ENCODE measurements at regions of chr12 and their contacts with region 1.

Region 1: GRCh38 chr12:106919910-106920544 is 35.7 kb upstream of the TMEM263 start:
- DNase-seq: no peak
- H3K4me3 Mint-ChIP-seq: no peak overlapping the region
- H3K27ac Mint-ChIP-seq: no peak overlapping the region
- H3K4me1 Mint-ChIP-seq: peaks cover 9% of the 10 kb centered on the region
- H3K27me3 Mint-ChIP-seq: peaks cover 5% of the 10 kb centered on the region

Region 2: GRCh38 chr12:106386813-106387535 is 533.1 kb before region 1 on chr12:
- CTCF ChIA-PET with region 1: interaction called, 7 read pairs
- POLR2A ChIA-PET with region 1: no interaction called
- intact Hi-C with region 1: loop called (anchors 1 kb)
- DNase-seq: no peak
- H3K4me3 Mint-ChIP-seq: no peak overlapping the region
- H3K27ac Mint-ChIP-seq: no peak overlapping the region
- H3K4me1 Mint-ChIP-seq: no peaks in the 10 kb centered on the region
- H3K27me3 Mint-ChIP-seq: no peaks in the 10 kb centered on the region

Region 3: GRCh38 chr12:106581543-106582248 is 338.3 kb before region 1 on chr12:
- CTCF ChIA-PET with region 1: no interaction called
- POLR2A ChIA-PET with region 1: no interaction called
- intact Hi-C with region 1: loop called (anchors 10 kb)
- DNase-seq: no peak
- H3K4me3 Mint-ChIP-seq: no peak overlapping the region
- H3K27ac Mint-ChIP-seq: no peak overlapping the region
- H3K4me1 Mint-ChIP-seq: peaks cover 38% of the 10 kb centered on the region
- H3K27me3 Mint-ChIP-seq: peaks cover 67% of the 10 kb centered on the region

Region 4: DNA sequence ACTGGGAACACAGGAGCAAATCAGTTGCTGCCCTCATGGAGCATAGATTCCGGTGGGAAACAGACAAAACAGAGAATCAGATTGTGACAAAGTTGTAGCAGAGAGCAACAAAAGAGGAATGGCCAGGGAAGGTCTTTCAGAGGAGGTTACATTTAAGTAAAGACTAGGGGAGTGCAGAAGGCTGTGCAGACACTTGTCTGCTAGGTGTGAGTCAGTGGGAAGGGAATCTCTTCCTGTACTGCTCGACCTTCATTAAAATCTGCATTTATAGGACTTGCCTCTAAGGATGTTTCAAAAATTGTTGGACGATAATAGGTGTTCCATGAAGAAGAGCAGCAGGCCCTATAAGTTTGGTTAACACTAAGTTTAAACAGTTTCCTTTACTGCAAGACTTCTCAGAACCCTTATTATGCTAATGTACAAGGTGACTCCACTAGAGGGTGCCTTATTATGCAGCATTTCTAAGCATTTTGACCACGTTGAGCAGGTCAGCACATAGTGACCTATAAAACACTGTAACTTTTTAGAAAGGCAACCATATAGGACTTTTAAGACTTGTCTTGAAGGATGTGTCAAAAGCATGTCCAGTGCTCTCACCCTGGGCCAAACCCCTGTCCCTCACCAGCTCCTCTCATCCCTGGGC is 237.3 kb before region 1 on chr12:
- CTCF ChIA-PET with region 1: interaction called, 3 read pairs
- POLR2A ChIA-PET with region 1: no interaction called
- intact Hi-C with region 1: loop called (anchors 5 kb)
- DNase-seq: no peak
- H3K4me3 Mint-ChIP-seq: no peak overlapping the region
- H3K27ac Mint-ChIP-seq: no peak overlapping the region
- H3K4me1 Mint-ChIP-seq: no peaks in the 10 kb centered on the region
- H3K27me3 Mint-ChIP-seq: no peaks in the 10 kb centered on the region

Region 5: DNA sequence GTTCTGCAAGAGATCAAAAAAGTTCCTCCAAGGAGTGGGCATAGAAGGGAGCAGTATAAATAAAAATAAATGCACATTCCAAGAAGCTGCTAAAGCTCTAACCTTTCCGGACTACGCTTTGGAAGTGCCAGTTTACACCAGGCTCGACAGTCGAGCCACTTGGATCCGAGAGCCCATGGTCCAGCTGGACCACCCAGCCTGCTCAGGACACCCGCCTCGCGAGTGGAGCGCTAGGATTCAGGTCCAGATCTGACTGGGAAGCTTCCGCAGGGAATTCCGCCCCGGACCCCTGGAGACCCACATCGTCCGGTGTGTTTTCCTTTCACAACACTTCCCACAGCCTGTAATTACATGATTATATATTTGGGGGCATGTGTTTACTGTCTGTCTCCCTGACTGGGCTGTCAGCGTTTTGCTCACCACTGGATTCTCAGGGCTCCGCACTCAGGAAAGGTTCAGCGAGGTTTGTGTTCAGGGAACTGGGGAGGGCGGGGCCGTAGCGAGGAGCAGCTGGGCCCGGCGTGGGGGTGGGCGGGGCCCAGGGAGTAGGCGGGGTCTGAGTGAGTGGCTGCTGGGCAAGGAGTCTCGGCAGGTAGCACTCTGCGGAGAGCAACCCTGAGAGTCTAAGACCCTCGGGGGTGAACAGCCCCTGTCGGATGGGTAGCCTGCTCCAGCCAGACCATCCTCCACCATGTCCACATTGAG is 16.6 kb before region 1 on chr12:
- CTCF ChIA-PET with region 1: interaction called, 15 read pairs
- POLR2A ChIA-PET with region 1: no interaction called
- intact Hi-C with region 1: no loop called
- DNase-seq: peak; percentile 88
- H3K4me3 Mint-ChIP-seq: peak overlapping the region; percentile 53
- H3K27ac Mint-ChIP-seq: no peak overlapping the region
- H3K4me1 Mint-ChIP-seq: no peaks in the 10 kb centered on the region
- H3K27me3 Mint-ChIP-seq: peaks cover 19% of the 10 kb centered on the region